Panc1 (cell line): ENCODE measurements at regions of chr3 and their contacts with region 1.

Region 1: GRCh38 chr3:88019024-88019423 is 39.8 kb downstream of the CGGBP1 start:
- DNase-seq: no peak
- ATAC-seq: no peak
- H3K4me3 ChIP-seq: no peak overlapping the region
- H3K27ac ChIP-seq: no peak overlapping the region
- H3K4me1 ChIP-seq: no peaks in the 10 kb centered on the region
- H3K27me3 ChIP-seq: no peaks in the 10 kb centered on the region
- CTCF ChIP-seq: no peak

Region 2: GRCh38 chr3:87949189-87949878 is 69.7 kb before region 1 on chr3:
- CTCF ChIA-PET with region 1: no interaction called
- POLR2A ChIA-PET with region 1: no interaction called
- in situ Hi-C with region 1: no loop called
- intact Hi-C with region 1: no loop called
- DNase-seq: no peak
- ATAC-seq: no peak
- H3K4me3 ChIP-seq: no peak overlapping the region
- H3K27ac ChIP-seq: no peak overlapping the region
- H3K4me1 ChIP-seq: no peaks in the 10 kb centered on the region
- H3K27me3 ChIP-seq: no peaks in the 10 kb centered on the region
- CTCF ChIP-seq: no peak

Region 3: GRCh38 chr3:88038566-88038965 is 19.5 kb after region 1 on chr3:
- CTCF ChIA-PET with region 1: no interaction called
- POLR2A ChIA-PET with region 1: interaction called, 11 read pairs
- in situ Hi-C with region 1: no loop called
- intact Hi-C with region 1: no loop called
- DNase-seq: no peak
- ATAC-seq: no peak
- H3K4me3 ChIP-seq: no peak overlapping the region
- H3K27ac ChIP-seq: no peak overlapping the region
- H3K4me1 ChIP-seq: no peaks in the 10 kb centered on the region
- H3K27me3 ChIP-seq: no peaks in the 10 kb centered on the region
- CTCF ChIP-seq: no peak

Region 4: DNA sequence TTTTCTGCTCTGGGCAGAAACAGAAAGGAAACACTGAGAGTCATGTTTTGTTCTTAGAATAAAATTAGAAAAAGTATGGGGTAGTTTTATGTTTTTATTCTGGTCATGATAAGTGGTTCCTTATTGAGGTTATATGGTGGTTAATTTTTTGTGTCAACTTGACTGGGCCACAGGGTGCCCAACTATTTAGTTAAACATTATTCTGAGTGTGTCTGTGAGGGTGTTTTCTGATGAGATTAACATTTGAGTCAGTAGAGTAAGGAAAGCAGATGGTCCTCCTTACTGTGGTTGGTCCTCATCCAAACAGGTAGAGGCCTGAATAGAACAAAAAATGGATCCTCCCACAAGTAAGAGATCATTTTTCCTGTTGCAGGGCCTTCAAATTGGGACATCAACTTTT is 229.6 kb after region 1 on chr3:
- CTCF ChIA-PET with region 1: no interaction called
- POLR2A ChIA-PET with region 1: no interaction called
- in situ Hi-C with region 1: no loop called
- intact Hi-C with region 1: no loop called
- DNase-seq: no peak
- ATAC-seq: no peak
- H3K4me3 ChIP-seq: no peak overlapping the region
- H3K27ac ChIP-seq: no peak overlapping the region
- H3K4me1 ChIP-seq: no peaks in the 10 kb centered on the region
- H3K27me3 ChIP-seq: no peaks in the 10 kb centered on the region
- CTCF ChIP-seq: no peak